ENCODE measurements at regions of chr16 and their contacts with region 1.

Region 1: GRCh38 chr16:68528686-68529379 is 10.3 kb upstream of the ZFP90 start:
- DNase-seq: peak; percentile 72
- H3K4me3 ChIP-seq: peak overlapping the region; percentile 5 to 32 (median 30)
- H3K27ac ChIP-seq: no peak overlapping the region
- H3K4me1 ChIP-seq: peaks cover 19% of the 10 kb centered on the region
- H3K27me3 ChIP-seq: no peaks in the 10 kb centered on the region
- CTCF ChIP-seq: peak; percentile 82 to 91

Region 2: DNA sequence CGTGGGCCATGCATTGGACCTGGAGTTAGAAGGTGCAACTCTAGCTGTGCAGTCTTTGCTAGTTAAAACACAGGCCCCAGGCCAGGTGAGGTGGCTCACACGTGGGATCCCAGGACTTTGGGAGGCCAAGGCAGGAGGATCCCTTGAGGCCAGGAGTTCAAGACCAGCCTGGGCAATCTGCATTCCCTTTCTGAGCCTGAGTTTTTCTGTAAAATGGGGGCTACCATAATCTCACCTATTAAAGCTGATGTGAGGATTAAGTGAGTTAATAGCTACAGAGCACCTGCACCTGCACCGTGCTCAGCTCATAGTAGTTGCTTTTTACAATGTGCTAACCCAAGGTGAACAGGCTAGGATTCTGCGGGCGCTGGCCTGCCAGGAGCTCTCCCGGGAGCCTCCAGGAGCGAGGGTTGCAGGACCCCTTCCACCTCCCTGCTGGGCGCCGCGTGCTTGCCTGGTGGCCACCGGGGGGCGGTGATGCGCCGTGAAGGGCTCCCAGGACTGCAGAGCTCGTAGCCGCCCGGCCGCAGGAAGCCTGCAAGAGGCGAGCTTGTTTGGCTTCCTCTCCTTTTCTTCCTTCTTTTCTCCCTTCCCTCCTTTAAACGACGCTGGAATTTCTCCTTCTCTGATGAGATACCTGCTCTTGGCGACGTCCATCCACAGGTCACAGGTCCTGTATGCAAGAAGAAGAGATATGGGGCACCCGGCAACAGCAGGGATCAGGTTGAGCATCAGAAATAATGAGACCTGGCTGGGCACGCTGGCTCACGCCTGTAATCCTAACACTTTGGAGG is 61.6 kb after region 1 on chr16:
- CTCF ChIA-PET with region 1: interaction called, 4 read pairs
- dilution Hi-C with region 1: no loop called
- in situ Hi-C with region 1: no loop called
- intact Hi-C with region 1: loop called (anchors 2 kb)
- DNase-seq: peak; percentile 69
- H3K4me3 ChIP-seq: no peak overlapping the region
- H3K27ac ChIP-seq: no peak overlapping the region
- H3K4me1 ChIP-seq: no peaks in the 10 kb centered on the region
- H3K27me3 ChIP-seq: no peaks in the 10 kb centered on the region
- CTCF ChIP-seq: peak; percentile 87 to 97

Region 3: GRCh38 chr16:68644715-68645493 is 116.1 kb after region 1 on chr16 and contains the start of gene CDH3:
- CTCF ChIA-PET with region 1: no interaction called
- dilution Hi-C with region 1: no loop called
- in situ Hi-C with region 1: no loop called
- intact Hi-C with region 1: loop called (anchors 2 kb)
- DNase-seq: peak; percentile 97
- H3K4me3 ChIP-seq: peak within 1 kb of the TSS; percentile 82 to 94 (median 89)
- H3K27ac ChIP-seq: peak within 1 kb of the TSS; percentile 87
- H3K4me1 ChIP-seq: peaks cover 59% of the 10 kb centered on the region
- H3K27me3 ChIP-seq: no peaks in the 10 kb centered on the region
- CTCF ChIP-seq: peak in 1 of 2 donors; percentile 31
- total RNA-seq, gene CDH3: 628 to 995 TPM

Region 4: DNA sequence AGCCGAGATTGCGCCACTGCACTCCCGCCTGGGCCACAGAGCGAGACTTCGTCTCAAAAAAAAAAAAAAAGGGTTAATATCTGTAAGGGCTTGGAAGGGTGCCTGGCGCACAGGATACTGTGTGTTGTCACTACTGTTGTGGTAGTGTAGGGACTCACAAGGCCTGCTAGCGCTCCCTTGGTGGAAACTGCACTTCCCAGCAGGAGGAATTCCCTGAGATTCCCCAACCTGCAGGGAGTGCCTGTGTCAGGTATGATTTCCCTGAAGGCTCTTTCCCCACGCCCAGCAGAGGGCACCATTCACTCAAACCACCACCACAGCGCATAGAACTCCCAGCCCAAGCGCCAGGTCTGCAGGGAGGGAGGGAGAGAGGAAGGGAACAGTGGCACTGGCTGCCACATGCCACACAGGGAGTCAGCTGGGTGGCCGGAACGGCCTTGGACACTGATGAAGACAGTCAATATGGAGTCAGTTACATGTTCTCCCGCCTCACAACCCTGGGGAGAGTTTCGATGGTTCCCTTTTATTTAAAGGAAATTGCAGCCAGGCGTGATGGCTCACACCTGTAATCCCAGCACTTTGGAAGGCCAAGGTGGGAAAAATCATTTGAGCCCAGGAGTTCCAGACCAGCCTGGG is 175.5 kb after region 1 on chr16:
- CTCF ChIA-PET with region 1: no interaction called
- dilution Hi-C with region 1: no loop called
- in situ Hi-C with region 1: no loop called
- intact Hi-C with region 1: loop called (anchors 2 kb)
- DNase-seq: peak; percentile 83
- H3K4me3 ChIP-seq: no peak overlapping the region
- H3K27ac ChIP-seq: no peak overlapping the region
- H3K4me1 ChIP-seq: peaks cover 22% of the 10 kb centered on the region
- H3K27me3 ChIP-seq: no peaks in the 10 kb centered on the region
- CTCF ChIP-seq: peak; percentile 84 to 92

Region 5: GRCh38 chr16:68800257-68800875 is 271.5 kb after region 1 on chr16:
- CTCF ChIA-PET with region 1: no interaction called
- dilution Hi-C with region 1: no loop called
- in situ Hi-C with region 1: loop called in 1 of 2 experiments (anchors 10 kb)
- intact Hi-C with region 1: loop called (anchors 1 kb)
- DNase-seq: peak; percentile 80
- H3K4me3 ChIP-seq: no peak overlapping the region
- H3K27ac ChIP-seq: peak overlapping the region; percentile 47
- H3K4me1 ChIP-seq: peaks cover 39% of the 10 kb centered on the region
- H3K27me3 ChIP-seq: no peaks in the 10 kb centered on the region
- CTCF ChIP-seq: peak; percentile 83 to 89

Region 6: GRCh38 chr16:68915589-68915988 is 386.8 kb after region 1 on chr16:
- CTCF ChIA-PET with region 1: no interaction called
- dilution Hi-C with region 1: no loop called
- in situ Hi-C with region 1: no loop called
- intact Hi-C with region 1: no loop called
- DNase-seq: peak; percentile 76
- H3K4me3 ChIP-seq: no peak overlapping the region
- H3K27ac ChIP-seq: peak overlapping the region; percentile 55
- H3K4me1 ChIP-seq: peaks cover 23% of the 10 kb centered on the region
- H3K27me3 ChIP-seq: no peaks in the 10 kb centered on the region
- CTCF ChIP-seq: peak in 1 of 2 donors; percentile 26

Region 7: GRCh38 chr16:69105489-69106361 is 576.9 kb after region 1 on chr16 and contains the start of gene HAS3:
- CTCF ChIA-PET with region 1: no interaction called
- dilution Hi-C with region 1: no loop called
- in situ Hi-C with region 1: no loop called
- intact Hi-C with region 1: loop called (anchors 5 kb)
- DNase-seq: peak; percentile 75
- H3K4me3 ChIP-seq: peak within 1 kb of the TSS; percentile 75 to 88 (median 80)
- H3K27ac ChIP-seq: no peak within 1 kb of the TSS
- H3K4me1 ChIP-seq: peaks cover 48% of the 10 kb centered on the region
- H3K27me3 ChIP-seq: no peaks in the 10 kb centered on the region
- CTCF ChIP-seq: peak; percentile 39 to 75
- total RNA-seq, gene HAS3: 38.2 to 133 TPM